Endothelial cell of umbilical vein (primary cell): ENCODE measurements at regions of chr5 and their contacts with region 1.

Region 1: DNA sequence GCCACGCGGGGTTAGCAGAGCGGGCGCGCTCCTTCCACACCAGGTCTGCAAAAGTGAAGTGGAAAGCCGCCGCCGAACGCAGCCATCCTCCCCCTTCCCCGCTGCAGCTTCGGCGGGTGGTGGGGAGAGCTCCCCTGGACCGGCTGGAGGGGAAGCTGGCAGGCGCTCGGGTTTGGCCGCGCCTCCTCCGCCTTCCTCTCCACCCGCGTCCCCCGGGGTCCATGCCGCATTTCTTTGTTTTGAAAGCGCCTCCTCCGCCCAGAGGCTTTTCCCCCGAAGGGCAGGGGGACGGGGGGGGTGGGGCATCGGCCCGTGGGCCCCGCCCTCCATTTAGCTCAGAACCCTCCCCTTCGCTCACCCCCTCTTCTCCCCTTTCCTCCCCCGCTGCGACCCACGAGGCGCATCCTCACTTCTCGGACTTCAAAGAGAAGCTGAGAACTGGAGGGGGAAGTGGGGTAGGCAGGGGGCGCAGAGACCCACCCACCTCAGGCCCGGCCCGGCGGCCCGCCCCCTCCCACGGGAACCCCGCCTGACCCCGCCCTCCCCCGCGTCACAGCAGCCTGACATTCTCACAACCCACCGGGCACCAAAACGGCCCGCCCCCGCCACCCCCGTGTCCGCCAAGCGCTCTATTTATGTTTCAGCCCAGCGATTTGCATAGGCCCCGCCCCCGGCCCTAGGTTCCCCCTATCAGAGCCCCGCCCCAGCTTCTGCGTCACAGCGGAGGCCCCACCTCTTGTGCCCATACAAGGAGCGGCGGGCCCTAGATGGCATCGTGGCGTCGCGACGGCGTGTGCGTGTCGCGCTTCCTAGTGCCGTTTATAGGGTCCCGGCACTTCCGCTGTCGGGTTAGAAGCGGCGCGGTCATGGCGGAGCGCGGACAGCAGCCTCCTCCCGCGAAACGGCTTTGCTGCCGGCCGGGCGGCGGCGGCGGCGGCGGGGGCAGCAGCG is at the start of gene ZSWIM6:
- DNase-seq: peak; percentile 99
- H3K4me3 ChIP-seq: peak within 1 kb of the TSS; percentile 76 to 99 (median 83)
- H3K27ac ChIP-seq: peak within 1 kb of the TSS; percentile 89
- H3K4me1 ChIP-seq: peaks cover 46% of the 10 kb centered on the region
- H3K27me3 ChIP-seq: no peaks in the 10 kb centered on the region
- CTCF ChIP-seq: no peak
- POLR2A ChIP-seq: peak; percentile 97
- total RNA-seq, gene ZSWIM6: 25.3 and 25.7 TPM in 2 replicates

Region 2: DNA sequence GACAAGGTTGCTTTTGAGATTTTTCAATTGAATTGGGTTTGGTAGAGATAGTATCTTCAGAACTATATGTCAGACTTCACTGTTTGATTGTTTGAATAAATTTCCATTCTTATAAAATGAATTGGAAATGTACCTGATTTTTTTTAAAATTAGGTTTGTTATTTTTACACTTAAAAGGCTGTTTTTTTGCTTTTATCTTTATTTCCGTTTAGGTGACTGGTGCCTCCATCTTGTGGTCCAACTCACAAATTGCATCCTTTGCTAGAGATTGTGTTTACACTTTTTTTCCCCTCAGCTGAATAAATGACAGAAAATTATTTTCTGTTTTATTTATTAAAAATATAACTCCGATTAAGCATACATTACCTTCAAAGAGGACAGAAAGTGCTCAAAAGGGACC is 371.1 kb before region 1 on chr5:
- CTCF ChIA-PET with region 1: interaction called, 26 read pairs
- POLR2A ChIA-PET with region 1: no interaction called
- dilution Hi-C with region 1: no loop called
- intact Hi-C with region 1: loop called (anchors 1 kb)
- DNase-seq: peak; percentile 40
- H3K4me3 ChIP-seq: no peak overlapping the region
- H3K27ac ChIP-seq: no peak overlapping the region
- H3K4me1 ChIP-seq: no peaks in the 10 kb centered on the region
- H3K27me3 ChIP-seq: no peaks in the 10 kb centered on the region
- CTCF ChIP-seq: peak; percentile 23 to 45
- POLR2A ChIP-seq: no peak

Region 3: GRCh38 chr5:61167382-61167781 is 164.3 kb before region 1 on chr5:
- CTCF ChIA-PET with region 1: interaction called, 14 read pairs
- POLR2A ChIA-PET with region 1: interaction called, 8 read pairs
- dilution Hi-C with region 1: no loop called
- intact Hi-C with region 1: loop called (anchors 1 kb)
- DNase-seq: peak; percentile 55
- H3K4me3 ChIP-seq: no peak overlapping the region
- H3K27ac ChIP-seq: no peak overlapping the region
- H3K4me1 ChIP-seq: peaks cover 4% of the 10 kb centered on the region
- H3K27me3 ChIP-seq: no peaks in the 10 kb centered on the region
- CTCF ChIP-seq: peak; percentile 33 to 43
- POLR2A ChIP-seq: no peak

Region 4: GRCh38 chr5:61301341-61302199 is 30.1 kb before region 1 on chr5:
- CTCF ChIA-PET with region 1: interaction called, 6 read pairs
- POLR2A ChIA-PET with region 1: interaction called, 3 read pairs
- dilution Hi-C with region 1: no loop called
- intact Hi-C with region 1: loop called (anchors 1 kb)
- DNase-seq: peak; percentile 29
- H3K4me3 ChIP-seq: no peak overlapping the region
- H3K27ac ChIP-seq: no peak overlapping the region
- H3K4me1 ChIP-seq: peaks cover 23% of the 10 kb centered on the region
- H3K27me3 ChIP-seq: no peaks in the 10 kb centered on the region
- CTCF ChIP-seq: no peak
- POLR2A ChIP-seq: no peak

Region 5: GRCh38 chr5:61534481-61535267 is 203.0 kb after region 1 on chr5:
- CTCF ChIA-PET with region 1: no interaction called
- POLR2A ChIA-PET with region 1: no interaction called
- dilution Hi-C with region 1: no loop called
- intact Hi-C with region 1: loop called (anchors 10 kb)
- DNase-seq: no peak
- H3K4me3 ChIP-seq: no peak overlapping the region
- H3K27ac ChIP-seq: no peak overlapping the region
- H3K4me1 ChIP-seq: no peaks in the 10 kb centered on the region
- H3K27me3 ChIP-seq: no peaks in the 10 kb centered on the region
- CTCF ChIP-seq: no peak
- POLR2A ChIP-seq: no peak

Region 6: DNA sequence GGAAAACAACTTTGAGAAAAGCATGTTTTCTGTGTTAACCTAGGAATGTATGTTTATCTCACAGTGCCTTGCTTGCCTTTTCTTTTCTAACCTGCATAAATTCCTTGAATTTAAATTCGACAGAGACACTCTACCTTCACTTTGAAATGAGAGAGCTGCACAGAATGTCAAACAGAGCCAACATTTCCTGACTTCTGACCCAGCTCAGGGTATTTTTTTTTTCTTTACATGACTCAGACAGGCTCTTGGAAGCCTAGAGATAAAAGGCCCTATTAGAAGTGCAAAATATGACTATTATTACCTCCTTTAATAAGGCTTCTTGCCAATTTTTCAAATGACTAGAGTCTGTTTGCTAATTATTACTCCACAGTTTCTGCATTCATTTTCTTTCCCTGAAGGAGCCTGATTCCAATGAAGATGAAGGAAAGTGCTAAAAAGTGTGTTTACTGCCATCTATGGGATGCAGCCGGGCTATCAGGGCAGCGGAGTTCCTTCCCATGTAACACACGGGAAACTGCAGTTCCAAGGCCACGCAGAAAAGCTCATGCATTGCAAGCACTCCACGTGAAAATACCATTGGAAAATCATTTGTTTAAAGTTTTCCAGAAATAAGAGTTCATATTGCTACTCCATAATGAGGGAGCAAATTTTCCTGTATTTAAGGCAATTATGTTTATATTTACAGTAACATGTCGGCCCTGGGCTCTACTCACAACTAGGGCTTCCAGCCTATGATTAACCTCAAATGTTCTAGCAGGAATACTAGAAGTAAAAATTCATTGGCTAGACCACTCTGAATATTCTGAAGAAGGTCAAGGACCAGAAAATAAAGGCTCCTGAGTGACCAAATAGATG is 486.0 kb after region 1 on chr5:
- CTCF ChIA-PET with region 1: interaction called, 6 read pairs
- POLR2A ChIA-PET with region 1: no interaction called
- dilution Hi-C with region 1: no loop called
- intact Hi-C with region 1: loop called (anchors 2 kb)
- DNase-seq: peak; percentile 61
- H3K4me3 ChIP-seq: no peak overlapping the region
- H3K27ac ChIP-seq: no peak overlapping the region
- H3K4me1 ChIP-seq: no peaks in the 10 kb centered on the region
- H3K27me3 ChIP-seq: peaks cover 9 to 12% of the 10 kb centered on the region in 2 experiments
- CTCF ChIP-seq: peak; percentile 47 to 58
- POLR2A ChIP-seq: no peak

Region 7: DNA sequence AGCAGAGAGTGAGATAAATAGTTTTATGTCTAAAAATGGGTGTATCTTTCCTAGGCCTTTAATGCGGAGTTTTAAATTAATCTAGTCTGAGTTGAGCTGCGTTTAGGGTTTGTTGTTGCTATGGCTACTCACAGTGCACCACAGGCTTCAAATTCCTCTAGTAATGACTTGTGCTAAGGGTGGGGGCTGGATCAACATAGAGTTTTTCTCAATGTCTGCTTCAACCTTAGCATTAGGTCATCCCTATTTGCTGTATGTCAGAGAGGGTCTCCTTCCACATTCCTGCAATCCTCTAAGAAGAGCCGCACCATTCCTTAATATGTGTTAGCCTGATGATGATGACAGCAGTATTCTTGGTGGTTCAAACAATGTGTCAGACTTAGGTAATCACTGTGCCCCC is 508.7 kb after region 1 on chr5:
- CTCF ChIA-PET with region 1: no interaction called
- POLR2A ChIA-PET with region 1: no interaction called
- dilution Hi-C with region 1: no loop called
- intact Hi-C with region 1: no loop called
- DNase-seq: no peak
- H3K4me3 ChIP-seq: no peak overlapping the region
- H3K27ac ChIP-seq: no peak overlapping the region
- H3K4me1 ChIP-seq: no peaks in the 10 kb centered on the region
- H3K27me3 ChIP-seq: peaks cover 0 to 2% of the 10 kb centered on the region in 2 experiments
- CTCF ChIP-seq: no peak
- POLR2A ChIP-seq: no peak